ENCODE measurements at regions of chr1 and their contacts with region 1.

Region 1: GRCh38 chr1:10032590-10033358 is at the start of gene UBE4B:
- DNase-seq: peak; percentile 99
- H3K4me3 Mint-ChIP-seq: peak within 1 kb of the TSS; percentile 93
- H3K27ac Mint-ChIP-seq: peak within 1 kb of the TSS; percentile 88
- H3K4me1 Mint-ChIP-seq: peaks cover 23% of the 10 kb centered on the region
- H3K27me3 Mint-ChIP-seq: peaks cover 2% of the 10 kb centered on the region
- total RNA-seq, gene UBE4B: 31.3 and 32.5 TPM in 2 replicates

Region 2: DNA sequence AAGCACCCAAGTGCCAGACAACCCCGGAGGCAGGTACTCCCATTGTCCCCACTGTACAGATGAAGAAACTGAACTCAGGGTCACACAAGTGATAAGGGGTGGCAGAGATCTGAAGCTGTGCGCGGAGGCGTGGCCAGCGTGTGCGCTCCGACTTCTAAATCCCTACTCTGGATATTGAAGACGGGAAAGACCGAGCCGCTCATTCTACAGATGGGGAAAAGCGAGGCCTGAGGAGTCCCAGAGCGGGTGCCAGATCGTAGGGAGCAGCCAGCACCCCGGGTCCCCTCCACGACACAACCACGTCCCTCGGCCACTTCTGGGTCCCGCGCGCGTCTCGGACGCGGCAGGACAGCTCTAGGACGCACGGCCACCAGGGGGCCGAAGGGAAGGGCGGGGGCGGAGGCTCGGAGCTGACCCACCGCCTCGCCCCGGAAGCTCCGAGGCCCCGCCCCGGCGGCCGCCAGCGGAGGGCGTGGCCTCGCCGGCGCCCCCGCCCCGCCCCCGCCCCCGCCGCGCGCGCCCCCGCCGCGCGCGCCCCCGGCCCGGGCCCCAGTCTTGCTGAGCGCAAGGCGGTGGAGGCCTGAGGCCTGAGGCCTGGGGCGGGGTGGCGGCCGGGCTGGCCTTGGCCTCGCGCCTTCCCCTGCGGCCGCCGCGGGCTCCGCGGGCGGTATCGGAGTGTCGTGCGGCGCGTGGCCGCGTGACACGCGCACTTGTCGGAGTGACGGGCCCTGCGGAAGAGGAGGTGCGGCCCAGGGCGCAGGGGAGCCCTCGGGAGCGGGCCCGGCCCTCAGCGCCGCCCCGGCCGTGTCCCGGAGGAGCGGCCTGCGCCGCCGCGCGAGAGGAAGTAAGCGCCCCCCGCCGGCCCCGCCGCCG is 798.3 kb before region 1 on chr1 and contains the start of gene H6PD:
- intact Hi-C with region 1: loop called (anchors 5 kb)
- DNase-seq: peak; percentile 82
- H3K4me3 Mint-ChIP-seq: peak within 1 kb of the TSS; percentile 94
- H3K27ac Mint-ChIP-seq: peak within 1 kb of the TSS; percentile 98
- H3K4me1 Mint-ChIP-seq: peaks cover 36% of the 10 kb centered on the region
- H3K27me3 Mint-ChIP-seq: peaks cover 3% of the 10 kb centered on the region
- total RNA-seq, gene H6PD: 15.7 TPM in 2 replicates

Region 3: GRCh38 chr1:9823943-9824701 is 208.7 kb before region 1 on chr1 and contains the start of gene CLSTN1:
- intact Hi-C with region 1: loop called (anchors 1 kb)
- DNase-seq: peak; percentile 83
- H3K4me3 Mint-ChIP-seq: peak within 1 kb of the TSS; percentile 97
- H3K27ac Mint-ChIP-seq: peak within 1 kb of the TSS; percentile 84
- H3K4me1 Mint-ChIP-seq: peaks cover 40% of the 10 kb centered on the region
- H3K27me3 Mint-ChIP-seq: peaks cover 6% of the 10 kb centered on the region
- total RNA-seq, gene CLSTN1: 48.0 and 48.6 TPM in 2 replicates

Region 4: GRCh38 chr1:9910425-9911178 is 122.2 kb before region 1 on chr1:
- intact Hi-C with region 1: loop called (anchors 1 kb)
- DNase-seq: peak; percentile 100
- H3K4me3 Mint-ChIP-seq: peak overlapping the region; percentile 92
- H3K27ac Mint-ChIP-seq: peak overlapping the region; percentile 97
- H3K4me1 Mint-ChIP-seq: peaks cover 30% of the 10 kb centered on the region
- H3K27me3 Mint-ChIP-seq: peaks cover 7% of the 10 kb centered on the region

Region 5: DNA sequence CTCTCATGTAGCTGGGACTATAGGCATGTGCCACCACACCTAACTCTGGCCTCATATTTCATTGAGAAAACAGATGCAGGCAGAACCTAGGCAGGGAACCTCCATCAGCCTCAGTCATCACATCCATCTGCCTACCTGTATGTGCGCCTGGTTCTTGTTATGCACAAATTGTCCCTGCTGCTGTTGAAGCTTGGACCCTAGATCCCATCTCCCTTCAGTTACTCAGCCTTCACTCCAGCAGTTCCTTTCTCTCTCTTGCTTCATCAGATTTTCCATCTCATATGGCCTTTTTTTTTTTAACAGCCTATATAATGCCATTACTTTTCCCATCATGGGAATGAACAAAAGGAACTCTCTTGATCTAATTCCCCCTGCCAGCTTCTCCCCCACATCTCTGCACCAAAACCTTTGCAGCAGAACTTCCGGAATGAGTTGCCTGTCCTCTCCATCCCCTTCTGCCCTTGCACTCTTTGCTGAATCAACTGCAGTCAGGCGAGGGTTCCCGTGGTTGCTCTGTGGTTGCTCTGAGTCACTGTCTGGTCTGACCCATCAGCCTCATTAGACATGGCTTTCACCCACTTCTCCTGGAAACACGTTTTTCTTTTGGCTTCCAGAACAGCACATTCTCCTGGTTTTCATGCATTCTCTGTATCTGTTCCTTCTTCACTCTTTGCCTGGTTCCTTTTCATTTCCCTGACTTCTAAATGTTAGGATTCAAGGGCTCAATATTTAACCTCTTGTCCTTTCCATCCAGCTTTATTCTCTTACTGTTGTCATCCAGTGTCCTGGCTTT is 41.5 kb after region 1 on chr1:
- intact Hi-C with region 1: loop called (anchors 1 kb)
- DNase-seq: peak; percentile 41
- H3K4me3 Mint-ChIP-seq: peak overlapping the region; percentile 2
- H3K27ac Mint-ChIP-seq: peak overlapping the region; percentile 57
- H3K4me1 Mint-ChIP-seq: peaks cover 18% of the 10 kb centered on the region
- H3K27me3 Mint-ChIP-seq: no peaks in the 10 kb centered on the region

Region 6: DNA sequence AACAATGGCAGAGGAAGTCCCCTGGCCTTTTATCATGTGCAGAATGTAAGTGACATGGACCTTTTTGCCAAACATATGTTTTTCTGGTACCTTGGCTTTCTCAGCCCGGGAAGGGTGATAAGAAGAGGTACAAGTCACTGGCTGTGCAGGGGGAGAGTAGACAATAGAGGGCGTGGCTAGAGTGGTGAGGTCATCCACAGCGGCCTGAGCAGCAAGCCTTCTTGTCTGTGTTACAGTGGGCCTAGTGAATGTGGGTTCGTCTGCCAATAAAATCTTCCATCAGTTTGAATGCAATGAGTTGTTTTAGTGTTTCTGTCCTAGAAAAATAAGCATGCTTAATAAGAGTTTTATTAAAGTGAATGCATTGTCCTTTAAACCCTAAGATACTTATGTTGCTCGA is 307.0 kb after region 1 on chr1:
- intact Hi-C with region 1: no loop called
- DNase-seq: no peak
- H3K4me3 Mint-ChIP-seq: no peak overlapping the region
- H3K27ac Mint-ChIP-seq: no peak overlapping the region
- H3K4me1 Mint-ChIP-seq: no peaks in the 10 kb centered on the region
- H3K27me3 Mint-ChIP-seq: no peaks in the 10 kb centered on the region

Region 7: GRCh38 chr1:10398734-10399623 is 366.2 kb after region 1 on chr1 and contains the start of gene PGD:
- intact Hi-C with region 1: loop called (anchors 1 kb)
- DNase-seq: peak; percentile 98
- H3K4me3 Mint-ChIP-seq: peak within 1 kb of the TSS; percentile 92
- H3K27ac Mint-ChIP-seq: peak within 1 kb of the TSS; percentile 77
- H3K4me1 Mint-ChIP-seq: peaks cover 25% of the 10 kb centered on the region
- H3K27me3 Mint-ChIP-seq: no peaks in the 10 kb centered on the region
- total RNA-seq, gene PGD: 131 and 142 TPM in 2 replicates

Region 8: DNA sequence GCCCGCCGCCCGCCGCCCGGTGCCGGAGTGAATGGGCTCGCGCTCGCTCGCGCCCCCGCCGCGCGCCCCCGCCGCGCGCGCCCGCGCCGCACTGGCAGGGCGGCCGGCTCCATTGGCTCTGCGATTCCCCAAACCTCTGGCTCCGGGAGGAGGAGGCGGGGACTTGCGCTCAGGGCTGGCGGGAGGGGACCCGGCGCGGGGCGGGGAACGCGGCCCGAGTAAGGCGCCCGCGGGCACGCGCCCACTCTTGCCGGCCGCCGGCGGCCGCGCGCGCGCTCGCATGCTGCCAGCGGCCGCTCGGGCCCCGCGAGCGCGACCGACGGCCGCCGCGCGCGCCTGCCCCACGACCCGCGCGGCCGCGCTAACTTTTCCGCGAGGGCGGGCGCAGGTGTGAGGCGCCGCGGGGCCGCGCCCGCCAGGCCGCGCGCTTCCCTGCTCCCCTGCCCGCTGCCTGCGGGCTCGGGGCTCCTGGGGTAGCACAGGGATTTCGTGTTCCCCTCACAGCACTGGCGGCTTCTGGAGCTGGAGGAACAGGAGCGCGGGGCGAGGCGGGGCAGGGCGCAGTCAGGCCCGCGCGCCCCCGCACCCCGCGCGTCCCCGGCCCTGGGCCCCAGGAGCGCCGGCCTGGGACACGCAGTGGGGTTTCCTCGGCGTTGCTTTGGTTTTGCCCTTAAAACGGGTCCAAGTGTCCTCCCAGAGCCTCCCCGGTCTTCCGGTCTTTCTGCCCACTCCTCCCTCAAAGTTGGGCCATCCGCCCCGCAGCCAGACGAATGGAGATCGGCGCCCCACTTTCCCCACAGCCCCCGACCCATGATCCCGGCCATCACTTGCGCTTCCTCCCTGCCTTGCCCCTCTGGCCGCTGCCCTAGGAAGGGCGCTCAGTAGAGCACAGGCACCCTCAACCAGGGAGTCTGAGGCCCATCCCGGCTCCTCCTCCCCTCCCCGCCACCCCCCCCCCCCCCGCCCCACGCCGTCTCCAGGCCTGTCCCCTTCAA is 662.2 kb after region 1 on chr1:
- intact Hi-C with region 1: loop called (anchors 2 kb)
- DNase-seq: peak; percentile 74
- H3K4me3 Mint-ChIP-seq: peak overlapping the region; percentile 81
- H3K27ac Mint-ChIP-seq: peak overlapping the region; percentile 81
- H3K4me1 Mint-ChIP-seq: peaks cover 24% of the 10 kb centered on the region
- H3K27me3 Mint-ChIP-seq: peaks cover 23% of the 10 kb centered on the region